Activated naive CD8-positive, alpha-beta T cell treated with anti-CD3 and anti-CD28 coated beads, Interleukin-2, amount 10 ng/mL, durations not matched to agents 7 days and 5 days (primary cell): ENCODE measurements at regions of chr17 and their contacts with region 1.

Region 1: DNA sequence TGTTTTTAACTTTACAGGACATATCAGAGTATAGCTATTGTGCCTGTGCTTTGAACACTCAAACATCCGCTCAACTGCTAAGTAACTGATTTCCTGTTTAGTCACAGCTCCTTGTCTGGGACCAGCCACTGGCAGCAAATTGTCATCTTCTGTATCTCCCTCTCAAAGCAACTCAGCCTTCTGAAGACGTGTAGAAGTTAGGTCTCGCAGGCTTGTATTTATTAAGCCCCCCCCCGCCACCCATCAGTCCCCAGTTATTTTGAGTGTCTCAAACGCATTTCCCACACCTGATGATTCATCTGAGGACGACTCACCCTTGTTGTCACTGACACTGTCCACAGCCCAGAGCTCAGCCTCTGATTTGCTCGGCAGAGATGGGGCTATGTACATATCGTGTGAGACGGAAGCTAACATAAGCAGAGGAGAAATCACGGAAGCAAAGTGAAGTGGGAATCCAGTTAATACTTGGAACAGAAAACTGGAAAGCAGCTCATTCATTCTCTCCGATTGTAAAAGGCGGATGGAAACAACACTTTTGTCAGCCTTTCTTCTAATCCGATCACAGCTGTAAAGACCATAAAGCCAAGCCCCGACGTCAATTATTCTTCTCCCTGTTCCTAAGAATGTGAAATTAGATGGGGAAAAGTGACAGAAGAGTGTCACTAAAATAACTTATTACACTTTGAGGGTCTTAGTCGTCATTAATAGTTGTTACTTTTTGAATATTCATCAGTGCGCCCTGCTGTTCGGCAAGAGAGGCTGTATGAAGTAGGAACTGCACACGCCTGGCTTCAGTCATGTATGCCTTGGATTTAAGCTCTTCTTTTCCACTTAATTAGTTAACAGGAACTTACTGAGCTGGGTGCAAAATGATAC is 64.2 kb downstream of the PITPNC1 start:
- DNase-seq: peak; percentile 55
- ATAC-seq: peak; percentile 95
- H3K4me3 Mint-ChIP-seq: peak overlapping the region; percentile 85
- H3K27ac Mint-ChIP-seq: peak overlapping the region; percentile 97
- H3K4me1 Mint-ChIP-seq: peaks cover 57% of the 10 kb centered on the region
- H3K27me3 Mint-ChIP-seq: no peaks in the 10 kb centered on the region

Region 2: GRCh38 chr17:67376737-67377487 is 64.4 kb before region 1 on chr17 and contains the start of gene PITPNC1:
- POLR2A ChIA-PET with region 1: interaction called, 41 read pairs
- DNase-seq: peak; percentile 90
- ATAC-seq: peak; percentile 78
- H3K4me3 Mint-ChIP-seq: peak within 1 kb of the TSS; percentile 93
- H3K27ac Mint-ChIP-seq: peak within 1 kb of the TSS; percentile 90
- H3K4me1 Mint-ChIP-seq: peaks cover 39% of the 10 kb centered on the region
- H3K27me3 Mint-ChIP-seq: no peaks in the 10 kb centered on the region
- total RNA-seq, gene PITPNC1: 100 to 104 TPM

Region 3: DNA sequence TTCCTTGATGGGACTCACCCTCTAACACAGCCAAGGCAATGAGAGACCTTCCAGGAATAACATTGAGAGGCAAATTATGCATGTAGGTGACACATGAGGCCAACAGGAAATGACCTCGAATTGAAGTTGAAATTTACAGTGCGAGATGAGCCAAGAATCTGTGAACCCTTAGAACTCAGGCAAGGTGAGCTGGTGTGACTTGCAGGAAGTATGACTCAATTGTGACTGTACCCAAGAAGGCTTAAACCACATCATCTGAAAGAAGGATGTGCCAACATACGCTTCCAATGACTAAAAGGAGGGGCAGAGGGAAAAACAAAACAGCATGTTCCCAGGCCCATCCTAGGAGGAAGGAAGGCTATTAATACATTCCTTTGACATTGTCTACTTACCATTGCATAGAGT is 19.4 kb before region 1 on chr17:
- POLR2A ChIA-PET with region 1: interaction called, 16 read pairs
- DNase-seq: no peak
- ATAC-seq: peak; percentile 97
- H3K4me3 Mint-ChIP-seq: peak overlapping the region; percentile 60
- H3K27ac Mint-ChIP-seq: peak overlapping the region; percentile 93
- H3K4me1 Mint-ChIP-seq: peaks cover 56% of the 10 kb centered on the region
- H3K27me3 Mint-ChIP-seq: peaks cover 2% of the 10 kb centered on the region

Region 4: GRCh38 chr17:67461228-67461780 is 20.0 kb after region 1 on chr17:
- POLR2A ChIA-PET with region 1: interaction called, 156 read pairs
- DNase-seq: no peak
- ATAC-seq: peak; percentile 29
- H3K4me3 Mint-ChIP-seq: no peak overlapping the region
- H3K27ac Mint-ChIP-seq: peak overlapping the region; percentile 72
- H3K4me1 Mint-ChIP-seq: peaks cover 38% of the 10 kb centered on the region
- H3K27me3 Mint-ChIP-seq: no peaks in the 10 kb centered on the region

Region 5: DNA sequence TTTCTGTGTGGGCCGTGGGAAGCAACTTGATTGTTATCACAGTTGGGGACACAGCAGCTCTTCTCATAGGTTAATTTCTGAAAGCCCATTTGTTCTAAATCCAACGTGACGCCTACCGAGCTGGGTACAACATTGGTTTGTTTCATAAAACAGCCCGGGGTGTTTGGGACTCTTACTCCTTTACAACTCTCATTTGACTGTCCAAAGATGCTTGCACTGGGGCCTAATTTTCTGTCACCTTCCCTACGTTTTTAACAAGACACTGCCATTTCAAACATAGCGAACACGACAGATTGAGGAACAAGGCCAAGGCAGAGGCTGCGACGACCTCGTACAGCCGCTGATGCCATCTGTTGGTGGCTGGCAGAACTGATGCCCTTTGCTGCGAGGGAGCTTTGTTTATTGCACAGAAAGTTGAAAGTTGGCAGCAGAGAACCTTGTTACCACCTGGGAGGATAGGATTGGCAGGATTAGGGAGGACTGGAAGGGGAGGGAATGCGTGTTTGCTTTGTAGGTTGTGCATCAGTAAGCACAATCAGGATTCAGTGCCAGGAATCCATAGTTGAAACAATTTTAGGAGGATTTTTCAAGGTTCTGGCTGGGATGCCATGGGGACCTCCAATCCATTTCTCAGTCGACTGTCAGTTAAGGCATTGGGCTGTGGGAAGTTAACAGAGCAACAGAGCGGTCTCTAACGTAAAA is 34.1 kb after region 1 on chr17:
- POLR2A ChIA-PET with region 1: interaction called, 87 read pairs
- DNase-seq: peak; percentile 81
- ATAC-seq: peak; percentile 69
- H3K4me3 Mint-ChIP-seq: peak overlapping the region; percentile 74
- H3K27ac Mint-ChIP-seq: peak overlapping the region; percentile 94
- H3K4me1 Mint-ChIP-seq: peaks cover 61% of the 10 kb centered on the region
- H3K27me3 Mint-ChIP-seq: no peaks in the 10 kb centered on the region